ENCODE measurements at regions of chr20 and their contacts with region 1.

Region 1: DNA sequence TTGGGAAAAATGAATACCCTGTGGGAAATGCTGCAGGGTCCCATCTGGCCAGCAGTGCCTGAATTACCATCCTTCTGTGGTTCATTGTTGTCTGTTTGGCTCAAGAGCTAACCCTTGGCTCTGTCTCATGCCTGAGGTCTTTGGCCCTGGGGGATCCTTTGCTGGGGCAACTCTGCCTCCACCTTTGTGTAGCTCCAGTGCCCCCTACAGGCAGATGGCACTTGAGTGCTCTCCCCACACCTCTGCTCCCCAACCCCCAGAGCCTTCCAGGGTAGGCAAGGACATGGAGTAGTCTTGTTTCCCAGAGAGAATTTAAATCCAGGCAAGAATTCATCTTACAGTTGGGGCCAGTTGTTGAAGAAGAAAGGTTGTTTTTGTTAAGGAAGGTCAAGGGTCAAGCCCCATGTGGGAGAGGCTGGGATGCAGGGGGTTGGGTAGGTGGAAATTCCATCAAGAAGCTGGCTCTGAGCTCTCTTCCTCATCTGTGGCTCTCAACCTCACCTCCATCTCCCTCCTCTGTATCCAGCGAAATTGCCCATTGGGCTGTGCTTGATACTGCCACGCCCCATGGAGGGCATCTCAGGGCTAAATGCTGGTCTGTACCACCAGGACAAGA is 44.2 kb downstream of the ZNF831 start:
- DNase-seq: peak; percentile 88
- H3K4me3 Mint-ChIP-seq: no peak overlapping the region
- H3K27ac Mint-ChIP-seq: peak overlapping the region; percentile 46
- H3K4me1 Mint-ChIP-seq: peaks cover 23% of the 10 kb centered on the region
- H3K27me3 Mint-ChIP-seq: no peaks in the 10 kb centered on the region

Region 2: GRCh38 chr20:58870239-58871014 is 337.4 kb before region 1 on chr20:
- CTCF ChIA-PET with region 1: interaction called, 10 read pairs
- DNase-seq: peak; percentile 69
- H3K4me3 Mint-ChIP-seq: no peak overlapping the region
- H3K27ac Mint-ChIP-seq: no peak overlapping the region
- H3K4me1 Mint-ChIP-seq: peaks cover 12% of the 10 kb centered on the region
- H3K27me3 Mint-ChIP-seq: peaks cover 41% of the 10 kb centered on the region

Region 3: DNA sequence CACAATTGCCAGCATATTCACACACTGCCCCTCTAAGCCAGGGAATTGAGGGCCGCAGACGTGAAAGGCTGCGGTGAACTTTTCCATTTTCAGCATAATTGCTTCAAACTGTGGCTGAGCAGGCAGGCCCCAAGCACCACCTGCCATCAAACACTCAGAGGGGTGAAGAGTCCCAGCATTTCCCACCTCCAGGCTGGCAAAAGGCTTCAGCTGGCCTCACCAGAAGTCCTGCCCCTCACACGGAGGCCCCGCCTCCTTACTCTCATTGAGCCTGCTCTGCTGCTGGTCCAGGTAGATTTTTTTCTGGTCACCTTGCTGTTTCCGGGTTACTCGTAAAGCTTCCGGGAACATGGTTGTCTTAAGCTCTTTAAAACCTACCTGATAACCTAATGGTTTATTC is 113.3 kb before region 1 on chr20:
- CTCF ChIA-PET with region 1: interaction called, 168 read pairs
- DNase-seq: no peak
- H3K4me3 Mint-ChIP-seq: no peak overlapping the region
- H3K27ac Mint-ChIP-seq: no peak overlapping the region
- H3K4me1 Mint-ChIP-seq: no peaks in the 10 kb centered on the region
- H3K27me3 Mint-ChIP-seq: peaks cover 3% of the 10 kb centered on the region

Region 4: GRCh38 chr20:59159493-59160376 is 48.1 kb before region 1 on chr20:
- CTCF ChIA-PET with region 1: interaction called, 11 read pairs
- DNase-seq: peak; percentile 75
- H3K4me3 Mint-ChIP-seq: peak overlapping the region; percentile 82
- H3K27ac Mint-ChIP-seq: peak overlapping the region; percentile 95
- H3K4me1 Mint-ChIP-seq: peaks cover 74% of the 10 kb centered on the region
- H3K27me3 Mint-ChIP-seq: peaks cover under 1% of the 10 kb centered on the region

Region 5: DNA sequence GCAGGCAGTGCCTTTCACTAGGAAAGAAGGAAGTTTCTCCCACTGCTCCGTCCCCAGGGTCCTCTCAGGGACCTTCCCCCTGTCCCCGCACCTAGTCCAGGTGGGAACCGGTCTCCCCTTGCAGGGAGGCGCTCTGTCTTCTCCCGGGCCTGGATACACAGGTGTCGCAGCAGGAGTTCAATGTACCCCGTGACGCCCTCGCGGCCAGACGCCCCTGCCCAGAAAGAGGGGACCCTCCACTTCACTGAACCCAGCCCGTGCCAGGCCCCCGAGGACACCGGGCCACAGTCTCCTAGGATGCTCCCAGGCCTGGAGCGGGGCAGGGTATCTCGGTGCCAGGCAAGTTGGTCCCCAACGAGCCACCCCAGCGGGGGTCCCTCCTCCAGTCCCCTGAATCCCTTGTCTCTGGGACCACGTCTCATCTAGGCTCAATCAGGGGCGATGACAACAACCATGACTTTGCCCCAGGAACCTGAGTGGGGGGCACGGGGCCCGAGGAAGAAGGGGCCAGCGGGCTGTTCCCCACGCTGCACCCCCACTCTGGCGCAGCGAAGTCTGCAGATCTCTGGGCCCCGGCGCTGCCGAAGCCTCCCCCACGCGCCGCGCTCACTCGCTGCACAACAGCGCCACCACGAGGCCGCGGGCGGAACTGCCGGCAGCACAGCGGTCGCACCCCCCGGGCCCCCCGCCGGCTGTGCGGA is 195.6 kb after region 1 on chr20:
- CTCF ChIA-PET with region 1: interaction called, 17 read pairs
- DNase-seq: peak; percentile 78
- H3K4me3 Mint-ChIP-seq: no peak overlapping the region
- H3K27ac Mint-ChIP-seq: no peak overlapping the region
- H3K4me1 Mint-ChIP-seq: peaks cover 5% of the 10 kb centered on the region
- H3K27me3 Mint-ChIP-seq: peaks cover 35% of the 10 kb centered on the region

Measured in activated naive CD4-positive, alpha-beta T cell treated with anti-CD3 and anti-CD28 coated beads, Interleukin-2, amount 10 ng/mL, durations not matched to agents 7 days and 5 days (primary cell).